ENCODE measurements at regions of chr2 and their contacts with region 1.

Region 1: GRCh38 chr2:4662161-4662779 is 958.9 kb downstream of the DCDC2C start:
- DNase-seq: no peak
- H3K4me3 ChIP-seq: no peak overlapping the region
- H3K27ac ChIP-seq: no peak overlapping the region
- H3K4me1 ChIP-seq: no peaks in the 10 kb centered on the region
- H3K27me3 ChIP-seq: no peaks in the 10 kb centered on the region
- CTCF ChIP-seq: no peak
- EP300 ChIP-seq: no peak
- POLR2A ChIP-seq: no peak

Region 2: GRCh38 chr2:4903656-4904348 is 241.5 kb after region 1 on chr2:
- in situ Hi-C with region 1: no loop called
- intact Hi-C with region 1: loop called (anchors 10 kb)
- DNase-seq: no peak
- H3K4me3 ChIP-seq: no peak overlapping the region
- H3K27ac ChIP-seq: no peak overlapping the region
- H3K4me1 ChIP-seq: no peaks in the 10 kb centered on the region
- H3K27me3 ChIP-seq: no peaks in the 10 kb centered on the region
- CTCF ChIP-seq: no peak
- EP300 ChIP-seq: no peak
- POLR2A ChIP-seq: no peak

Region 3: GRCh38 chr2:5070257-5070656 is 408.0 kb after region 1 on chr2:
- in situ Hi-C with region 1: no loop called
- intact Hi-C with region 1: no loop called
- DNase-seq: no peak
- H3K4me3 ChIP-seq: no peak overlapping the region
- H3K27ac ChIP-seq: no peak overlapping the region
- H3K4me1 ChIP-seq: no peaks in the 10 kb centered on the region
- H3K27me3 ChIP-seq: no peaks in the 10 kb centered on the region
- CTCF ChIP-seq: no peak
- EP300 ChIP-seq: no peak
- POLR2A ChIP-seq: no peak

Measured in transverse colon (tissue), 4 donors.